Activated CD4-positive, alpha-beta memory T cell treated with anti-CD3 and anti-CD28 coated beads, Interleukin-2, amount 10 ng/mL, durations not matched to agents 7 days and 5 days (primary cell): ENCODE measurements at regions of chr4 and their contacts with region 1.

Region 1: DNA sequence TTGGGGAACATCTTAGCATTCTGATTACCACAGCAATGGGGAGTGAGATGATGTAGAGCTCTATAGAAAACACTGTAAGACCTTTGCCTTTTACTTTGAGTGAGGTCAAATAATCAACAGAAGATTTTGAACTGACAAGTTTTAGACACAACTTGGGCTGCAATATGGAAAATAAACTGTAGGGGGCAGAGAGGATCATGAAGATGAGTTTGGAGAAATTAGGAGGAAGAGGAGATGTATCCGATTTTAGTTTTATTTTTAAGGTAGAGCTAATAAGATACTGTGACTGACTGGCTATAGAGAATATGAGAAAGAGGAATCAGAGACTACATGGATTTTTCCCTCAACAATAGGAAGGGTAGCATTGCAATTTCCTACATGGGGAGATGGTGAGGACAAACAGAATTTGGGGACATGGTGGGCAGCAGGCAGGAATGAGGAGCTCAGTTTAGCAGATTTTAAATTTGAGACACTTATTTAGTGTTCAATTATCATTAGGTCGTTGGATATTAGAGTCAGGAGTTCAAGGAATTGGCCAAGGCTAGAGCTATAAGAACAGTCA is 563.1 kb downstream of the INPP4B start:
- DNase-seq: no peak
- H3K4me3 Mint-ChIP-seq: no peak overlapping the region
- H3K27ac Mint-ChIP-seq: no peak overlapping the region
- H3K4me1 Mint-ChIP-seq: peaks cover 11% of the 10 kb centered on the region
- H3K27me3 Mint-ChIP-seq: no peaks in the 10 kb centered on the region

Region 2: GRCh38 chr4:142293536-142293935 is 10.6 kb after region 1 on chr4:
- CTCF ChIA-PET with region 1: interaction called, 15 read pairs
- POLR2A ChIA-PET with region 1: interaction called, 6 read pairs
- DNase-seq: no peak
- H3K4me3 Mint-ChIP-seq: no peak overlapping the region
- H3K27ac Mint-ChIP-seq: no peak overlapping the region
- H3K4me1 Mint-ChIP-seq: peaks cover 31% of the 10 kb centered on the region
- H3K27me3 Mint-ChIP-seq: no peaks in the 10 kb centered on the region

Region 3: GRCh38 chr4:142435599-142436235 is 152.8 kb after region 1 on chr4:
- CTCF ChIA-PET with region 1: no interaction called
- POLR2A ChIA-PET with region 1: no interaction called
- DNase-seq: no peak
- H3K4me3 Mint-ChIP-seq: no peak overlapping the region
- H3K27ac Mint-ChIP-seq: no peak overlapping the region
- H3K4me1 Mint-ChIP-seq: peaks cover 4% of the 10 kb centered on the region
- H3K27me3 Mint-ChIP-seq: no peaks in the 10 kb centered on the region

Region 4: DNA sequence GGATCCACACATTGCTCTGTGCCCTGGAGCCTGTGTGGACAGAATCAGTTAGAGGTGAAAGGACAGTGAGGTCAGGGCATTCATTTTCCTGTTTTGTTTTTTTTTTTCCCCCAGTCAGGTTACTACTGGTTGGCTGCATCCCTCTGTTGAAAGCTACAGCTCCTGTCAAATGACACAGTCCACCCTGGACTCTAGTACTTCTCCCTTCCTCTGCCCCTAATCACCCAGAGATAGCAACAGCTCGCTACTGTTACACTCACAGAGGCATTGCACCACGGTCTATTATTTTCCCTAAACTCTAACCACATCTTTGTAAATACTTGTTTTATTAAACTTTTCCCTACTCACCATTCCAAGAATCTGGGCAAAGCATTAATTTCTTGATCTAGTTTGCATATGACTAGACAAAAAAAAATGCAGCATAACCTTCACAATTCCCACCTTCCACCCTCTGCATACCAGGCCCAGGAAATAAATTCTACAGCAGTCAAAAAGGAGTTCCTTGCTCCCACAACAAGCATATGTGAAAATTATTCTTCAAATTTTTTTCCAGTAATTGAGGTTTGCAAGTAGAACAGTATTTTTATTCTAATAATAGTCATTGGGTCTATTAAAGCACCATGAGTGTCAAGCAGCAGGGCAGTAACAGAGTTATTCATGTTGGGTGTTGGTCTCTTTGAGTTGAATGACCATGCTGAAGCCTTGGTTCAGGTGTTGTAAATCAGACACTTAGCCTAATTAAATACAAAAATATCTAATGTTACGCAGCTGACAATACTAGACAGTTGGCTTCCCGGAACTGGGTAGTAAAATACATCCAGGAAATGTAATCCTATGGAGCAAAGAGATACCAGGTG is 233.9 kb after region 1 on chr4:
- CTCF ChIA-PET with region 1: no interaction called
- POLR2A ChIA-PET with region 1: no interaction called
- DNase-seq: no peak
- H3K4me3 Mint-ChIP-seq: no peak overlapping the region
- H3K27ac Mint-ChIP-seq: no peak overlapping the region
- H3K4me1 Mint-ChIP-seq: no peaks in the 10 kb centered on the region
- H3K27me3 Mint-ChIP-seq: no peaks in the 10 kb centered on the region

Region 5: GRCh38 chr4:142535009-142535408 is 252.1 kb after region 1 on chr4:
- CTCF ChIA-PET with region 1: no interaction called
- POLR2A ChIA-PET with region 1: no interaction called
- DNase-seq: no peak
- H3K4me3 Mint-ChIP-seq: no peak overlapping the region
- H3K27ac Mint-ChIP-seq: no peak overlapping the region
- H3K4me1 Mint-ChIP-seq: peaks cover 2% of the 10 kb centered on the region
- H3K27me3 Mint-ChIP-seq: no peaks in the 10 kb centered on the region